Calu3 (cell line): ENCODE measurements at regions of chr5 and their contacts with region 1.

Region 1: DNA sequence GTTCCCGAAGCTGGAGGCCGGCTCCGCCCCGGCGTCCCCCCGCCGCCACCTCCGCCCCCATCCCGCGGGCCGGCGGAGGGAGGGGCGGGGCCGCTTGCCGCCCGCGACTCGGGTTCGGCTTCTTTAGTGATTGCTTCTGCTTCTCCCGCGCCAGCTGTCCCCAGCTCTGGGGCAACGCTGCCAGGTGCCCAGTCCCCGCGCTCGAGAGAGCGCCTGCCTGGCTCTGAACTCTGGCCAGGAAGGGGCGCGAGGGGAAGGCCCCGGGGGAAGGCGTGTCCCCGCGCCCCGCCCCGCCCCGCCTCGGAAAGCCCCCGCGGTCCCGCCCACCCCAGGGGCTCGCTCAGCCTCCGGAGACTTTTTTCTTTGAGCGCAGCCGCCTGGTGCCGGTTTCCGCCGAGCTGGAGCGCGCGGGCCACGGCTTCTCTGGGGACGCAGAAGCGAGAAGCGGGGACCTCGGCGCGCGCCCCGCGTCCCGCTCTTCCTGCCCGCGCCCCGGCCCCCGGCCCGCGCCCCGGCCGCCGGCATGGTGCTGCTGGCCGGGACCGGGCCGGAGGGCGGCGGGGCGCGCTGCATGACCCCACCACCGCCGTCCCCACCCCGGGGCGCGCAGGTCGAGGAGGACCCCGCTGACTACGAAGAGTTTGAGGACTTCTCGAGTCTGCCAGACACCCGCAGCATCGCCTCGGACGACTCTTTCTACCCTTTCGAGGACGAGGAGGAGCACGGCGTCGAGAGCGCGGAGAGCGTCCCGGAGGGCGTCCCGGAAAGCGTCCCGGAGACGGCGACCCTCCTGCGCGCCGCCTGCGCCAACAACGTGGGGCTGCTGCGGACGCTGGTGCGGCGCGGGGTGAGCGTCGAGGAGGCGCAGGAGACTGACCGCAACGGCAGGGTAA is at the start of gene ANKRD33B:
- DNase-seq: peak; percentile 70
- H3K4me3 Mint-ChIP-seq: peak within 1 kb of the TSS; percentile 79
- H3K27ac Mint-ChIP-seq: peak within 1 kb of the TSS; percentile 12
- H3K4me1 Mint-ChIP-seq: peaks cover 9% of the 10 kb centered on the region
- H3K27me3 Mint-ChIP-seq: peaks cover 7% of the 10 kb centered on the region
- CTCF ChIP-seq: no peak
- total RNA-seq, gene ANKRD33B: 2.9 and 3.6 TPM in 2 replicates

Region 2: GRCh38 chr5:10214041-10214440 is 350.1 kb before region 1 on chr5:
- CTCF ChIA-PET with region 1: no interaction called
- intact Hi-C with region 1: no loop called
- DNase-seq: no peak
- H3K4me3 Mint-ChIP-seq: no peak overlapping the region
- H3K27ac Mint-ChIP-seq: no peak overlapping the region
- H3K4me1 Mint-ChIP-seq: no peaks in the 10 kb centered on the region
- H3K27me3 Mint-ChIP-seq: no peaks in the 10 kb centered on the region
- CTCF ChIP-seq: no peak

Region 3: GRCh38 chr5:10627160-10627701 is 63.0 kb after region 1 on chr5:
- CTCF ChIA-PET with region 1: no interaction called
- intact Hi-C with region 1: loop called (anchors 10 kb)
- DNase-seq: no peak
- H3K4me3 Mint-ChIP-seq: peak overlapping the region; percentile 66
- H3K27ac Mint-ChIP-seq: peak overlapping the region; percentile 67
- H3K4me1 Mint-ChIP-seq: peaks cover 19% of the 10 kb centered on the region
- H3K27me3 Mint-ChIP-seq: peaks cover 20% of the 10 kb centered on the region
- CTCF ChIP-seq: no peak

Region 4: GRCh38 chr5:10735569-10736276 is 171.5 kb after region 1 on chr5:
- CTCF ChIA-PET with region 1: no interaction called
- intact Hi-C with region 1: no loop called
- DNase-seq: no peak
- H3K4me3 Mint-ChIP-seq: no peak overlapping the region
- H3K27ac Mint-ChIP-seq: no peak overlapping the region
- H3K4me1 Mint-ChIP-seq: peaks cover 13% of the 10 kb centered on the region
- H3K27me3 Mint-ChIP-seq: no peaks in the 10 kb centered on the region
- CTCF ChIP-seq: no peak